Activated CD8-positive, alpha-beta memory T cell treated with anti-CD3 and anti-CD28 coated beads, Interleukin-2, amount 10 ng/mL, durations not matched to agents 7 days and 5 days (primary cell): ENCODE measurements at regions of chr5 and their contacts with region 1.

Region 1: GRCh38 chr5:902129-902916 is 9.6 kb downstream of the TRIP13 start:
- DNase-seq: no peak
- ATAC-seq: no peak
- H3K4me3 Mint-ChIP-seq: no peak overlapping the region
- H3K27ac Mint-ChIP-seq: no peak overlapping the region
- H3K4me1 Mint-ChIP-seq: peaks cover 2% of the 10 kb centered on the region
- H3K27me3 Mint-ChIP-seq: no peaks in the 10 kb centered on the region

Region 2: GRCh38 chr5:671459-672328 is 230.6 kb before region 1 on chr5:
- CTCF ChIA-PET with region 1: interaction called, 15 read pairs
- DNase-seq: peak; percentile 75
- ATAC-seq: peak; percentile 77
- H3K4me3 Mint-ChIP-seq: no peak overlapping the region
- H3K27ac Mint-ChIP-seq: no peak overlapping the region
- H3K4me1 Mint-ChIP-seq: peaks cover 5% of the 10 kb centered on the region
- H3K27me3 Mint-ChIP-seq: peaks cover 4% of the 10 kb centered on the region

Region 3: DNA sequence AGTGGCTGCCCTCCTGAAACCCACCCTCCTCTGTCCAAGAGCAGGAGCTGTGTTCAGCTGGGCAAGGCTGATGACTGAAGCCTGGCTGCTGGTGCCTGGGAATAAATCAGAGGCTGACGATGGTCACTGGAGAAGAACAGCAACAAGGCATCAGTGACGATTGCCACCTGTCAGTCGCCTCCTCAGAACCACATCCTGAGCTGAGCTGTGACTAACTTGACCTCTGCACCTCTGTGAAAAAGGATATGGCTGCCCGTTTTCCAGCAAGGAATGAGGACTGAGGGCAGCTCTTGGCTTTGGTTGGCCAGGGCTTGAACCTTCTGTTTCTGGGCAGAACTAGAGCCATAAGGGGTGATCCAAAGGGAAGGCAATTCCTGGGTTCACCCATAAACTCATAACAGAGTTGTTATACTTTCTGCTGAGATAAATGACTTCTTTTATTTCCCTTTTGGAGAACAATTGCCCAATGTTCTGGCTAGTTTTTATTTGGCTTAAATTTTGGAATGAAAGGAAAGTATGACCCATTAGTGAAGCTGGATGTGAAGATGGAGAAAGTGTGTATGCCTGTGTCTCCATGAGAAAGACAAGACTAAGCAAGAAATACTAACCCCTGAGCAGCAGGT is 30.4 kb after region 1 on chr5:
- CTCF ChIA-PET with region 1: no interaction called
- DNase-seq: peak; percentile 38
- ATAC-seq: no peak
- H3K4me3 Mint-ChIP-seq: no peak overlapping the region
- H3K27ac Mint-ChIP-seq: no peak overlapping the region
- H3K4me1 Mint-ChIP-seq: peaks cover 19% of the 10 kb centered on the region
- H3K27me3 Mint-ChIP-seq: peaks cover 3% of the 10 kb centered on the region